Naive thymus-derived CD4-positive, alpha-beta T cell (primary cell): ENCODE measurements at regions of chr1 and their contacts with region 1.

Region 1: DNA sequence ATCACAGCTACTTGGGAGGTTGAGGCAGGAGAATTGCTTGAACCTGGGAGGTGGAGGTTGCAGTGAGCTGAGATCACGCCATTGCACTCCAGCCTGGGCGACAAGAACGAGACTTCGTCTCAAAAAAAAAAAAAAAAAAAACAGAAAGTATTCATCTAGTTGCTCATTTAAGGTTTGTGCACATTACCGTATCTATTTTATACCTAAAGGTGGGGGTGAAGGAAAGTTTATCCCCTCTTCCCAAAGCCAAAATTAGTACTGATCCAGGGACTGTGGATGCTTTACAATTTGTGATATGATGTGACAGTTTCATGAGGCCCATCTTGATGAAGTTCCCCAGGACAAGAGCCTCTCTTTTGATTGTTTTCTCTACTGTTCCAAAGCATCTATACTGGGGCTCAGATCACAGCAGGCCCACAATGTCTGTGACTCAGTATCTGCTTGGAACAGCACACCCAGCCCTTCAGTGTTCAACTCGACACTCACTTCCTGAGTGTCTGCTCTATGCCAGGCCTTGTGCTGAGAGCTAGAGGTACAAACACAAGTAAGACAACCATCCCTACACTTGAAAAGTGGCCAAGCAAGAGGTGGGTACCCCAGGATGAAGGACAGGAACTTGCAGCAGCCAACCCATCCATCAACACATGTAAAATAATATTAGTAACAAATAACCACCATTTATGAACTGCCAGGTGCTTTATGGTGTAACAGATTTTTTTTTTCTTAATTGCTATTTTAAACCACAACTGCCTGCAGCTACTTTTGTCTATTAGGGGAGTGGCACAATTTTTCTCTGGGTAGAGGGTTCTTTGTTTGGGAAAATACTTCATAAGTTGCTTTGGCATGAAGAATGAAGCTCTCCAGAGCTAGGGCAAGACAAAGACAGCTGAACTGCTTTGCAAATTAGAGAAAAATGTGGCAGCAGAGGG is 29.0 kb upstream of the KHDRBS1 start:
- DNase-seq: peak in 5 of 9 donors; percentile 14 to 41 (median 22)
- ATAC-seq: peak; percentile 58
- H3K4me3 ChIP-seq: no peak overlapping the region
- H3K4me3 Mint-ChIP-seq: peak overlapping the region; percentile 7 to 80 (median 66)
- H3K27ac ChIP-seq: peak overlapping the region; percentile 66
- H3K27ac Mint-ChIP-seq: peak overlapping the region; percentile 57 to 95 (median 91)
- H3K4me1 ChIP-seq: peaks cover 46 to 59% of the 10 kb centered on the region in 2 donors
- H3K4me1 Mint-ChIP-seq: peaks cover 34 to 73% (median 60%) of the 10 kb centered on the region in 7 donors
- H3K27me3 ChIP-seq: no peaks in the 10 kb centered on the region
- H3K27me3 Mint-ChIP-seq: no peaks in the 10 kb centered on the region

Region 2: DNA sequence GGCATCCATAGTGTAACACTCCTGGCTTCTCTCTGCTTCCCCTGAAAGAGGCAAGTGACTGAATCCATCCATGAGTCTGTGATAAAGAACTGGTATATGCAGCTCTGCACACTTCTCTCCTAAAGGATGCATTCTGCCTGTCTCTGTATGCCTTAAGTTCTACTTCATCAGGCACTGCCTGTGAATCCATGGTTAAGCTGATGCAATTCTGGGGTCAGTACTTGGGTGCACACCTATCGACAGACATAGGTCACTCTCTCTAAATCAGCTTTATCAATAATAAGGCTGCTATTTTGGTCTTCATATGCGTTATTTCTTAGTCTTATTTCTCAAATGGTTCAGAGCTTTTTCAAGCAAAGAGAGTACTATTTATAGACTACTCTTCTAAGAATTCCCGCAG is 13.8 kb before region 1 on chr1:
- CTCF ChIA-PET with region 1: interaction called, 5 read pairs
- POLR2A ChIA-PET with region 1: interaction called, 9 read pairs
- intact Hi-C with region 1: loop called in 1 of 2 experiments (anchors 2 kb)
- DNase-seq: no peak
- ATAC-seq: no peak
- H3K4me3 ChIP-seq: no peak overlapping the region
- H3K4me3 Mint-ChIP-seq: no peak overlapping the region
- H3K27ac ChIP-seq: no peak overlapping the region
- H3K27ac Mint-ChIP-seq: peak overlapping the region in 1 of 9 donors; percentile 8
- H3K4me1 ChIP-seq: no peaks in the 10 kb centered on the region
- H3K4me1 Mint-ChIP-seq: peaks cover 0 to 5% (median 0%) of the 10 kb centered on the region in 7 donors
- H3K27me3 ChIP-seq: no peaks in the 10 kb centered on the region
- H3K27me3 Mint-ChIP-seq: peaks cover 0 to 3% (median 0%) of the 10 kb centered on the region in 5 donors

Region 3: GRCh38 chr1:32005522-32005921 is 20.8 kb after region 1 on chr1:
- CTCF ChIA-PET with region 1: interaction called, 8 read pairs
- POLR2A ChIA-PET with region 1: interaction called, 5 read pairs
- intact Hi-C with region 1: loop called in 1 of 2 experiments (anchors 2 kb)
- DNase-seq: no peak
- ATAC-seq: peak; percentile 57
- H3K4me3 ChIP-seq: no peak overlapping the region
- H3K4me3 Mint-ChIP-seq: peak overlapping the region in 1 of 10 donors; percentile 30
- H3K27ac ChIP-seq: no peak overlapping the region
- H3K27ac Mint-ChIP-seq: peak overlapping the region in 2 of 9 donors; percentile 6 to 26
- H3K4me1 ChIP-seq: peaks cover 3 to 4% of the 10 kb centered on the region in 2 donors
- H3K4me1 Mint-ChIP-seq: peaks cover 9 to 19% (median 13%) of the 10 kb centered on the region in 7 donors
- H3K27me3 ChIP-seq: no peaks in the 10 kb centered on the region
- H3K27me3 Mint-ChIP-seq: no peaks in the 10 kb centered on the region